PC-9 (cell line): ENCODE measurements at regions of chr7 and their contacts with region 1.

Region 1: DNA sequence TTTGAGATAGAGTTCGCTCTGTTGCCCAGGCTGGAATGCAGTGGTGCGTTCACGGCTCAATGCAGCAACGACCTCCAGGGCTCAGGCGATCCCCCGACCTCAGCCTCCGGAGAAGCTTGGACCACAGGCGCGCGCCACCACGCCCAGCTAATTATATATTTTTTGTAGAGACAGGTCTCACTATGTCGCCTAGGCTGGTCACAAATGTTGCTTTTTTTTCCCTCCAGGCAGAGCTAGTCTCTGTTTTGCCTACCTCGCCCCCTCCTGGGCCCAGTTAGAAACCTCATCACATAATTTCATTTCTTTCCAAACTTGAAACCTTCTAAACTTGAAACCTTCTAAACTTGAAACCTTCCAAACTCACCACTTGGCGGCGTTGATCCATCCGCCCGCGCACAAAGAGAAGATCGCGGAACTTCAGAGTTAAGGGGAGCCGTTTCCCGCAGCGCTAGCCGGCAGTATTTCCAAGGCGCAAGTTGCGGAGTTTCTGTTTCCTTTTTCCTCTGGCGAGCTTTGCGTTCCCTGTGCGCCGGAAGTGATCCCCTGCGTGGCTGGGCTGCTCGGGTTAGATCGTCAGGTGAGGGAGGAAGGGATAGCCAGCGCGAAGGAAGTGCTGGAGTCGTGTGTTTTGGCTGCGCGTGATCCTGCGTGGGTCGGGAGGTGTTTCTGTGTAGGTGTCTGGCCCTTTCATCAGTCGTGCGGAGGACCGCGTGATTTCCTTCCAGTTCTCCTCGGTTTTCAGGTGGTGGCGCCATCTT is at the start of gene SSBP1:
- DNase-seq: peak; percentile 93 to 95
- H3K4me3 ChIP-seq: peak within 1 kb of the TSS; percentile 100
- H3K27ac ChIP-seq: peak within 1 kb of the TSS; percentile 77
- H3K4me1 ChIP-seq: peaks cover 27% of the 10 kb centered on the region
- H3K27me3 ChIP-seq: no peaks in the 10 kb centered on the region
- CTCF ChIP-seq: peak; percentile 83
- total RNA-seq, gene SSBP1: 150 and 193 TPM in 2 replicates

Region 2: DNA sequence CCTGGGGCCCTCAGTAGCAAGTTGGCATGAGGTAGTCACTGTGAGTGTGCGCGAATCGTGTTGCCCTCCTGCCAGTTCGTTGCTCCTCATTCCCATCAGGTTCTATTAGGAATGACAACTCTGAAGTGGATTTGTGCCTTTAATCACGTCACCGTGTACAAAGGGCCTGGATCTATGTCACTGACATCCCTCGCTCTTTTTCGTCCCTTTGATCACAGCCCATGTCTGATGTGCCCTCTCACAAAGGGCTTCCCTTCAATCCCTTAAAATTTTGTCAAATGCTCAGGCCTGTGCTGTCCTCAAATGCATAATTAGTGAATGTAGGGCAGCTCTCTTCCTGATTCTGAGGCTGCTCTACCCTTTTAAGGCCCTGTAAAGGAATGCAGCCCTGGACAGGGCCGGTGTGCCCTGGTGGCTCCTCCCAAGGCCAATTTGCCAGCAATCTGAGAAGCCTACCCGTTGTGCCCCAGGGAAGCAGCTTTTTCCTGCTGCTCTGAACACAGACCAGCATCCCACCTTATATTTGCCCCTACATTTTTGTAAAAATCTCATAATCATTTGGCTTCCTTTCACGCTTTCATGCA is 570.5 kb before region 1 on chr7:
- CTCF ChIA-PET with region 1: no interaction called
- POLR2A ChIA-PET with region 1: no interaction called
- intact Hi-C with region 1: no loop called
- DNase-seq: no peak
- H3K4me3 ChIP-seq: no peak overlapping the region
- H3K27ac ChIP-seq: no peak overlapping the region
- H3K4me1 ChIP-seq: no peaks in the 10 kb centered on the region
- H3K27me3 ChIP-seq: peaks cover 58% of the 10 kb centered on the region; the same call in 1 of the 2 replicates
- CTCF ChIP-seq: no peak

Region 3: GRCh38 chr7:141333459-141333858 is 404.6 kb before region 1 on chr7:
- CTCF ChIA-PET with region 1: no interaction called
- POLR2A ChIA-PET with region 1: no interaction called
- intact Hi-C with region 1: no loop called
- DNase-seq: no peak
- H3K4me3 ChIP-seq: no peak overlapping the region
- H3K27ac ChIP-seq: no peak overlapping the region
- H3K4me1 ChIP-seq: no peaks in the 10 kb centered on the region
- H3K27me3 ChIP-seq: 0 out of 2 replicates have a peak, but pooled peaks cover 7% of the 10 kb centered on the region
- CTCF ChIP-seq: no peak

Region 4: DNA sequence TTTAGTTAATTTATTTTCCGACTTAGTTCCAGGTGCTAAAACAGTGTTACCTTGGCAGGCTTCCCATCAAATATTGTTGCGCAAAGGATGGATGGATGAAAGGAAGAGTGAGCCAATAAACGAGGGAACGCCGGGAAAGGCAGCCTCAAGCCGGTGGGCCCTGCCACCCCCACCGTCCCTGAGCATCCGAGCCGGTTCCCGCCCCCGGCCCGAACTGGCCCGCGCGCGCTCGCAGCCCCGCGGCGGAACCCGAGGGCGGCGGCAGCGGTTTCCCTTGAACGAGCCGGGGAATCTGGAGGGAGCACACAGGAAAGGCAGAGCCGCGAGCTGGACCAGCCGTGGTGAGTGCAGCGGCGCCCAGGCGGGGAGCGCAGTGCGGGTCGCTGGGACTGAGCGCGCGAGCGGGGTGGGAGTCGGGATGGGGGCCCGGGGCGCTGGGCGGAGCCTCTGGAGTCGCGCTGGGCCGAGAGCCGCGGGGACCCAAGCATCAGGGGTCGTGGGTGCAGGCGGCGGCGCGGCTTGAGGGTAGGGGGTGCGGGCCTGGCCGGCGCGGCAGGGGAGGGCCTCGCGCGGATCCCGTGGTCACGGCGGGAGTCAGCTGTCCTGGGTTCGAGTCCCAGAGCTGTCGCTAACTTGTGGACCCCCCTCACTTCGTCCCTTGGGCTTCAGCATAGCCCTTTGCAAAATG is 186.8 kb before region 1 on chr7 and contains the start of gene AGK:
- CTCF ChIA-PET with region 1: no interaction called
- POLR2A ChIA-PET with region 1: no interaction called
- intact Hi-C with region 1: loop called (anchors 1 kb)
- DNase-seq: peak; percentile 48 to 81
- H3K4me3 ChIP-seq: peak within 1 kb of the TSS; percentile 84
- H3K27ac ChIP-seq: no peak within 1 kb of the TSS
- H3K4me1 ChIP-seq: peaks cover 10% of the 10 kb centered on the region
- H3K27me3 ChIP-seq: no peaks in the 10 kb centered on the region
- CTCF ChIP-seq: no peak
- total RNA-seq, gene AGK: 35.6 and 44.1 TPM in 2 replicates

Region 5: DNA sequence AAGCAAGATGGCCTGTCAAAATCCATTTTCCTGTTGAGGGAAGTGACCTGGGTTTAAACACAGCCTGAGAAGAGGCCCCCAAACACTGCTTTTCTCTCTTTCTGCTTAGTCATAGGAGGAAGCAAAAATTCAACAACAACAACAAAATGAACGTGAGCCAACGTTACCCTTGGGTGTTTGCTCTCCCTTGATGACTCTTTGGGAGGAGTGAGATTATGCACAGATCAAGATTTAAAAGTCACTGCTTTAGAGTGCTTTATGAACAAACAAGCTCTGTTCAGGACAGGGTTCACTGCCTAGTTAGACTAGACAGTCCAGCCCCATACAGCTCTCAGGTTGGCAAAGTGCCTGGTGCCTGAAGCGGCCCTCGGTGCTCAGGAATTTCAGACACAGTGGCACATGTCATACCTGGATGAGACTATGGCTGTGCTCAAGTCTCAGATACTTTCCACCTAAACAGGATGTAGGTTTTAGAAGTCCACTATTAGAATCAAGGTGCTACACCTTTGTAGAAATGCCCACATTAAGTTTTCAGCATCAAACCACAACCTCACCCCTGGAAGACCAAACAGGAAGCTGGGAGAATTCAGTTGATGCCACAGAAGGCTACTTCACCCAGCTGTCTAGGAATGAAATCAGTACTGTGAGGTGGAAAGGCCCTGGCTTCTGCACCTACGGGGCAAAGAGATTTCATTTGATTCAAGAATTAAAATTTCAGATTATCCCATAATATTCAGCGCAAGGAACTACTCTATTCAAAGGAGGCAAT is 74.7 kb before region 1 on chr7:
- CTCF ChIA-PET with region 1: interaction called, 3 read pairs
- POLR2A ChIA-PET with region 1: interaction called, 16 read pairs
- intact Hi-C with region 1: loop called (anchors 2 kb)
- DNase-seq: peak; percentile 89 to 97
- H3K4me3 ChIP-seq: no peak overlapping the region
- H3K27ac ChIP-seq: peak overlapping the region; percentile 96
- H3K4me1 ChIP-seq: peaks cover 34% of the 10 kb centered on the region
- H3K27me3 ChIP-seq: no peaks in the 10 kb centered on the region
- CTCF ChIP-seq: peak; percentile 29; the same call in 1 of the 2 replicates

Region 6: DNA sequence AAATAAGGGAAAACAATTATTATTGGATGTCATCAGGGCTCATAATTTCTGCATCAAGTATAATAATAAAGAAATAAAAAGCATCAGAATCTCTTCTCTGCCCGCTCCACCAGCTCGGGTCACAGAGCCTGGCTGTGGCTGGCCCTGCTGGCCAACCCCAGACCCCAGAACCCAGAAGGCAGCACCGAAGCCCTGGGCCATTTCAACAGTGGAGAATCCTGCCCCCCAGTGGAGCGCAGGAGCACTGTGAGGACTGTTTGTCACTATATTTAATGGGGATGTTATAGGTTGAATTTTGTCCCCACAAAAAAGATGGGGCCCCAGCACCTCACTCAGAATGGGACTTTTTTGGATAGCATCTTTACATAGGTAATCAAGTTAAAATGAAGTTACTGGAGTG is 63.3 kb before region 1 on chr7:
- CTCF ChIA-PET with region 1: no interaction called
- POLR2A ChIA-PET with region 1: interaction called, 6 read pairs
- intact Hi-C with region 1: loop called (anchors 1 kb)
- DNase-seq: peak in 1 of 2 experiments; percentile 20
- H3K4me3 ChIP-seq: no peak overlapping the region
- H3K27ac ChIP-seq: no peak overlapping the region
- H3K4me1 ChIP-seq: no peaks in the 10 kb centered on the region; the same call in 1 of the 2 replicates
- H3K27me3 ChIP-seq: no peaks in the 10 kb centered on the region
- CTCF ChIP-seq: peak; percentile 53; the same call in 1 of the 2 replicates

Region 7: DNA sequence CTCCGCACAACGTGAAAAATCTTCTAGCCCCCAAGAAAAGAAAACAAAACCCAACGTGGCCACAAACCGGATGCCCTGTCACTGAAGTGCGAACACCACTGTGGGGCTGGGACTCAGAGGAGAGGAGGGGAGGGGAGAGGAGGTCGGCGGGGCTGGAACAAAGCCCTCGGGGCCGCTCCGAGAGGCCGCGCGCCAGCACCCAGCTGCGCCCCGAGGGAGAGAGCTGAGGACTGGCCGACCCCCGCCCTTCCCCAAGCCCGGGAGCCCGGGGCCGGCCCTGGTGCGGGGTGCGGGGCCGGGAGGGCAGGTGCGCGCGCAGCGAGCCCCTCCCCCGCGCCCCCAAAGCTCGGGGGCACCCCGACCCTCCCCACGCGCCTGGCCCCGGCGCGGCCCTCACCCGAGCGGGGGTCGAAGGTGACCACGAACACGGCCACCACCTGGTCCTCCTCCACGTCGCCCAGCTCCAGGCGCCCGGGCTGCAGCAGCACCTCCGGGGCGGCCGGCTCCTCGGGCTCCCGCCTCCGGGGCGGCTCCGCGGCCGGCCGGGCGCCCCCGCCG is 36.4 kb before region 1 on chr7:
- CTCF ChIA-PET with region 1: interaction called, 3 read pairs
- POLR2A ChIA-PET with region 1: interaction called, 3 read pairs
- intact Hi-C with region 1: loop called (anchors 1 kb)
- DNase-seq: peak in 1 of 2 experiments; percentile 45
- H3K4me3 ChIP-seq: peak overlapping the region; percentile 84
- H3K27ac ChIP-seq: no peak overlapping the region
- H3K4me1 ChIP-seq: peaks cover 18% of the 10 kb centered on the region
- H3K27me3 ChIP-seq: no peaks in the 10 kb centered on the region
- CTCF ChIP-seq: no peak